ENCODE measurements at regions of chrX and their contacts with region 1.

Region 1: DNA sequence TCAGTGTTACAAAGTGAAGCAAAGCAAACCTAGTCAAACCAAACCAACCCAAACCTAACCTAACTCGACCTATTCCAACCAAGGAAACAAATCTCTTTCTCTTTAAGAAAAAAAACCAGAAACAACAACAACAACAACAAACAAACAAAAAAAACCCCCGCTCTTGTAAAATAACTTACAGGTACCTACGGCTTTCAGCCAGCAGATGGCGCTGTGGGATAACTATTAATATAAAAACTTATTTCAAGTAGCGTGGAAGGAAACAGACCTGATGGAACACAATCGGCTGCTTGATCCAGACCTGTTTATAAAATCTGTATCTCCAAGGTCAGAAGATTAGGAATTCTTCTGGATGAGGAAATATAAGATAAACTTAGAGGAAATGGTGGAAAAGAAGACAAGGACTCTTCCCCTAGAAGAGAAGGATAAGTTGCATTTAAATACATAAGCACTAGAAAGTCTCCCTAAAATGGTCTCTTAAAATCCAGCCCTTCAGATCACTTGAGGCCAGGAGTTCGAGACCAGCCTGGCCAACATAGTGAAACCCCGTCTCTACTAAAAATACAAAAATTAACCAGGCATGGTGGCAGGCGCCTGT is 34.4 kb upstream of the CDKL5 start:
- DNase-seq: peak; percentile 59 to 82 (median 66)
- ATAC-seq: peak in 1 of 2 donors; percentile 54
- H3K4me3 ChIP-seq: no peak overlapping the region
- H3K27ac ChIP-seq: no peak overlapping the region
- H3K4me1 ChIP-seq: no peaks in the 10 kb centered on the region
- H3K27me3 ChIP-seq: no peaks in the 10 kb centered on the region

Region 2: GRCh38 chrX:18899796-18900447 is 508.9 kb after region 1 on chrX:
- intact Hi-C with region 1: loop called in 1 of 4 experiments (anchors 10 kb)
- DNase-seq: peak in 1 of 3 donors; percentile 68
- ATAC-seq: peak in 1 of 2 donors; percentile 49
- H3K4me3 ChIP-seq: no peak overlapping the region
- H3K27ac ChIP-seq: no peak overlapping the region
- H3K4me1 ChIP-seq: no peaks in the 10 kb centered on the region
- H3K27me3 ChIP-seq: no peaks in the 10 kb centered on the region

Region 3: GRCh38 chrX:19017271-19017670 is 626.2 kb after region 1 on chrX:
- intact Hi-C with region 1: loop called in 1 of 4 experiments (anchors 10 kb)
- DNase-seq: no peak
- ATAC-seq: no peak
- H3K4me3 ChIP-seq: no peak overlapping the region
- H3K27ac ChIP-seq: no peak overlapping the region
- H3K4me1 ChIP-seq: no peaks in the 10 kb centered on the region
- H3K27me3 ChIP-seq: no peaks in the 10 kb centered on the region

Region 4: GRCh38 chrX:19334945-19335626 is 944.0 kb after region 1 on chrX:
- intact Hi-C with region 1: loop called in 3 of 4 experiments (anchors 5 to 10 kb)
- DNase-seq: no peak
- ATAC-seq: no peak
- H3K4me3 ChIP-seq: no peak overlapping the region
- H3K27ac ChIP-seq: no peak overlapping the region
- H3K4me1 ChIP-seq: peaks cover 1% of the 10 kb centered on the region
- H3K27me3 ChIP-seq: no peaks in the 10 kb centered on the region

Measured in right cardiac atrium (tissue), 5 donors.